Activated T-helper 2 cell treated with anti-CD3 and anti-CD28 coated beads, Interferon-gamma antibody, Interleukin-2, Interleukin-4, amounts not matched to agents 10 μg/mL and 5 μg/mL and 100 μg/mL, durations not matched to agents 14 hours and 24 hours and 36 hours (primary cell): ENCODE measurements at regions of chr6 and their contacts with region 1.

Region 1: GRCh38 chr6:29964887-29965562 is 22.7 kb downstream of the HLA-A start:
- DNase-seq: peak; percentile 73
- H3K4me3 Mint-ChIP-seq: peak overlapping the region; percentile 90
- H3K27ac Mint-ChIP-seq: peak overlapping the region; percentile 94
- H3K4me1 Mint-ChIP-seq: peaks cover 42% of the 10 kb centered on the region
- H3K27me3 Mint-ChIP-seq: no peaks in the 10 kb centered on the region

Region 2: GRCh38 chr6:29723262-29723665 is 241.8 kb before region 1 on chr6 and contains the start of gene HLA-F:
- intact Hi-C with region 1: loop called (anchors 10 kb)
- DNase-seq: peak; percentile 77
- H3K4me3 Mint-ChIP-seq: peak within 1 kb of the TSS; percentile 89
- H3K27ac Mint-ChIP-seq: peak within 1 kb of the TSS; percentile 89
- H3K4me1 Mint-ChIP-seq: peaks cover 48% of the 10 kb centered on the region
- H3K27me3 Mint-ChIP-seq: no peaks in the 10 kb centered on the region
- total RNA-seq, gene HLA-F: 266 and 278 TPM in 2 replicates

Region 3: DNA sequence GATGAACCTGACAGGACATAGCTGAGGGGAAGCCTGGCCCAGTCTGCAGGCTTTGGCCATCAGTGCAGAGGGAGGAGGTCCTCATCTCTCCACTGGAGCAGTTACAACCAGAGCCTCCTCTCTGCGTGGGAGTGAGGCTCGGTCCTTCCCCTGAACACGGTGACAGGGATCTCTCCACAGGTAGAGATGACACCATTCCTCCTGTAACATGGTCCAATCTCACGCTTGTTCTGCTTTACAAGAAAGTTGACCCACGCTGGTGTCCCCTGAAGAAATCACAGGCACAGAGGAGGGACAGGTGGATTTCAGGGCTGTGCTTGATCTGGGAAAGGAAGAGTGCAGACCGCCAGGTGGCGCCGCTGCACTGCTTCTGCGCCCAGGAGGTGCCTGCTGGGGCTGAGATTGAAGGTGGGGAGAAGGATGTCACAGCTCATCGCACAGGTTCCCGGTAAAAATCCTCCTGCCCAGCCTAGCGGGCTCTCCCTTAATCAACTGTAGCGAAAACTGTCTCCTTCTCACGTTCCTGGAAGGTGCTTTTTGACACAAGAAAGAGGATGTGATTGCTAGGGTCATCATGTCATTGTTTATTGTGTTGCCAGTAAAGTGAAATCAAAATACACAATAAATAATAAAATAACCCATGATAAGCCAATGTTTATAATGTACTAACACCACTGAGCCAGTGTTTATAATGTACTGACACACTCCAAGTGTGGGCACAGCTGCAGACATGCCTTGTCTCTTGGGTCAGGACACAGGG is 117.0 kb before region 1 on chr6:
- intact Hi-C with region 1: loop called (anchors 2 kb)
- DNase-seq: peak; percentile 70
- H3K4me3 Mint-ChIP-seq: no peak overlapping the region
- H3K27ac Mint-ChIP-seq: no peak overlapping the region
- H3K4me1 Mint-ChIP-seq: peaks cover 20% of the 10 kb centered on the region
- H3K27me3 Mint-ChIP-seq: peaks cover 60% of the 10 kb centered on the region

Region 4: DNA sequence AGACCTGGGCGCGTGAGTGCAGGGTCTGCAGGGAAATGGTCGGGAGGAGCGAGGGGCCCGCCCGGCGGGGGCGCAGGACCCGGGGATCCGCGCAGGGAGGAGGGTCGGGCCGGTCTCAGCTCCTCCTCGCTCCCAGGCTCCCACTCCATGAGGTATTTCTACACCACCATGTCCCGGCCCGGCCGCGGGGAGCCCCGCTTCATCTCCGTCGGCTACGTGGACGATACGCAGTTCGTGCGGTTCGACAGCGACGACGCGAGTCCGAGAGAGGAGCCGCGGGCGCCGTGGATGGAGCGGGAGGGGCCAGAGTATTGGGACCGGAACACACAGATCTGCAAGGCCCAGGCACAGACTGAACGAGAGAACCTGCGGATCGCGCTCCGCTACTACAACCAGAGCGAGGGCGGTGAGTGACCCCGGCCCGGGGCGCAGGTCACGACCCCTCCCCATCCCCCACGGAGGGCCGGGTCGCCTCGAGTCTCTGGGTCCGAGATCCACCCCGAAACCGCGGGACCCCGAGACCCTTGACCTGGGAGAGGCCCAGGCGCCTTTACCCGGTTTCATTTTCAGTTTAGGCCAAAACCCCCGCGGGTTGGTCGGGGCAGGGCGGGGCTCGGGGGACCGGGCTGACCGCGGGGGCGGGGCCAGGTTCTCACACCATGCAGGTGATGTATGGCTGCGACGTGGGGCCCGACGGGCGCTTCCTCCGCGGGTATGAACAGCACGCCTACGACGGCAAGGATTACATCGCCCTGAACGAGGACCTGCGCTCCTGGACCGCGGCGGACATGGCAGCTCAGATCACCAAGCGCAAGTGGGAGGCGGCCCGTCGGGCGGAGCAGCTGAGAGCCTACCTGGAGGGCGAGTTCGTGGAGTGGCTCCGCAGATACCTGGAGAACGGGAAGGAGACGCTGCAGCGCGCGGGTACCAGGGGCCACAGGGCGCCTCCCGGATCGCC is 76.9 kb before region 1 on chr6:
- intact Hi-C with region 1: loop called (anchors 10 kb)
- DNase-seq: peak; percentile 79
- H3K4me3 Mint-ChIP-seq: peak overlapping the region; percentile 81
- H3K27ac Mint-ChIP-seq: peak overlapping the region; percentile 74
- H3K4me1 Mint-ChIP-seq: peaks cover 9% of the 10 kb centered on the region
- H3K27me3 Mint-ChIP-seq: peaks cover 28% of the 10 kb centered on the region

Region 5: DNA sequence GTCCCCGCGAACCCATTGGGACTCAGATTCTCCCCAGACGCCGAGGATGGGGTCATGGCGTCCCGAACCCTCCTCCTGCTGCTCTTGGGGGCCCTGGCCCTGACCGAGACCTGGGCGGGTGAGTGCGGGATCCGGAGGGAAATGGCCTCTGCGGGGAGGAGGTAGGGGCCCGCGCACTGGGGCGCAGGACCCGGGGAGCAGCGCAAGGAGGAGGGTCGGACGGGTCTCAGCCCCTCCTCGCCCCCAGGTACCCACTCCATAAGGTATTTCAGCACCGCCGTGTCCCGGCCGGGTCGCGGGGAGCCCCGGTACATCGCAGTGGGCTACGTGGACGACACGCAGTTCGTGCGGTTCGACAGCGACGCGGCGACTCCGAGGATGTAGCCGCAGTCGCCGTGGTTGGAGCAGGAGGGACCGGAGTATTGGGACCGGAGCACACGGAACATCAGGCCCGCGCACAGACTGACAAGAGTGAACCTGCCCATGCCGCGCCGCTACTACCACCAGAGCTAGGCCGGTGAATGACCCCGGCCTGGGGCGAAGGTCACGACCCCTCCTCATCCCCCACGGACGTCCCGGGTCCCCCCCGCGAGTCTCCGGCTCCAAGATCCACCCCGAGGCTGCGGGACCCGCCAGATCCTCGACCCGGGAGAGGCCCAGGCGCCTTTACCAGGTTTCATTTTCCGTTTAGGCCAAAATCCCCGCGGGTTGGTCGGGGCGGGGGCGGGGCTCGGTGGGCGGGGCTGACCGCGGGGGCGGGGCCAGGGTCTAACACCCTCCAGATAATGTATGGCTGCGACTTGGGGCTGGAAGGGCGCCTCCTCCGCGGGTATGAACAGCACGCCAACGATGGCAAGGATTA is 38.4 kb before region 1 on chr6:
- intact Hi-C with region 1: loop called (anchors 2 kb)
- DNase-seq: peak; percentile 80
- H3K4me3 Mint-ChIP-seq: peak overlapping the region; percentile 88
- H3K27ac Mint-ChIP-seq: peak overlapping the region; percentile 91
- H3K4me1 Mint-ChIP-seq: peaks cover 27% of the 10 kb centered on the region
- H3K27me3 Mint-ChIP-seq: no peaks in the 10 kb centered on the region

Region 6: GRCh38 chr6:29942275-29943052 is 22.6 kb before region 1 on chr6 and contains the start of gene HLA-A:
- intact Hi-C with region 1: loop called (anchors 1 kb)
- DNase-seq: peak; percentile 85
- H3K4me3 Mint-ChIP-seq: peak within 1 kb of the TSS; percentile 95
- H3K27ac Mint-ChIP-seq: peak within 1 kb of the TSS; percentile 99
- H3K4me1 Mint-ChIP-seq: peaks cover 39% of the 10 kb centered on the region
- H3K27me3 Mint-ChIP-seq: no peaks in the 10 kb centered on the region
- total RNA-seq, gene HLA-A: 1,569 and 1,592 TPM in 2 replicates

Region 7: GRCh38 chr6:30037182-30037788 is 72.3 kb after region 1 on chr6:
- intact Hi-C with region 1: no loop called
- DNase-seq: no peak
- H3K4me3 Mint-ChIP-seq: no peak overlapping the region
- H3K27ac Mint-ChIP-seq: no peak overlapping the region
- H3K4me1 Mint-ChIP-seq: peaks cover 3% of the 10 kb centered on the region
- H3K27me3 Mint-ChIP-seq: no peaks in the 10 kb centered on the region

Region 8: GRCh38 chr6:30061092-30061857 is 96.2 kb after region 1 on chr6 and contains the start of gene POLR1H:
- intact Hi-C with region 1: loop called (anchors 5 kb)
- DNase-seq: peak; percentile 82
- H3K4me3 Mint-ChIP-seq: peak within 1 kb of the TSS; percentile 99
- H3K27ac Mint-ChIP-seq: peak within 1 kb of the TSS; percentile 97
- H3K4me1 Mint-ChIP-seq: peaks cover 40% of the 10 kb centered on the region
- H3K27me3 Mint-ChIP-seq: no peaks in the 10 kb centered on the region
- total RNA-seq, gene POLR1H: 76.0 and 78.2 TPM in 2 replicates